ENCODE measurements at regions of chr17 and their contacts with region 1.

Region 1: DNA sequence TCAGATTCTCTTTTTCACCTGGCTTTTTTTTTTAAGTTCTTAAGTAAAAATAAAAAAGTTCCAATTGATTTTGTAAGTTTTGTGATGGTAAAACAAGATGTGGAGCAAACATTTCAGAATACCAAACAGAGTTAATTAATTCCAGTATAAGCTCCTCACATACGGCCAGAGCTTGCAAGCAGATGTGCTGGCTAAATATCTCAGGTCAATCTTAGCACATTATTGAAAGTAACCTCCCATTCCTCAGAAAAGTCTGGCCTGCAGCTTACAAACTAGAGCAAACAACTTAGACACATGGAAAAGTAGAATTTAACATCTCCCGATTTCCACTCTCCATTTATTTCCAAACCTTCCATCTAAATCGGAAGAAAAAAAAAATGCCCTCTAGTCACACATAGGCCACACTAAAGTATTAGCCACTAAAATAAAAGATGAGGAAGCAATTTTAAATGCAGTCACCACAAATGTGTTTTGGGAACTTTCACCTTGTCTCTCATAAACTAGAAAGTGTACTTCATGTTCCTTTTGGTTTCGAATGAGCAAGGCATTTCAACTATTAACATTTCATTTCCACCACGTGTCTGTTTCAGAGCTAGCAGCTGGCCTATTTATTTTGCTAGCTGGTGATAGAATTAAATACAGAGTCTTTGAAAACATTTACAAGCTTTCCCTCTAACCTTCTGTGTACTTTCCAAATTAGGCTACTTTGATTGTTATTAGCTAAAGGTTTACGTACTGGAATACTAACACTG is 143.3 kb downstream of the STX8 start:
- H3K4me3 Mint-ChIP-seq: no peak overlapping the region
- H3K27ac Mint-ChIP-seq: no peak overlapping the region
- H3K4me1 Mint-ChIP-seq: no peaks in the 10 kb centered on the region
- H3K27me3 Mint-ChIP-seq: no peaks in the 10 kb centered on the region

Region 2: GRCh38 chr17:9371019-9371418 is 61.3 kb before region 1 on chr17:
- intact Hi-C with region 1: loop called (anchors 10 kb)
- H3K4me3 Mint-ChIP-seq: no peak overlapping the region
- H3K27ac Mint-ChIP-seq: no peak overlapping the region
- H3K4me1 Mint-ChIP-seq: peaks cover 40% of the 10 kb centered on the region
- H3K27me3 Mint-ChIP-seq: no peaks in the 10 kb centered on the region

Region 3: DNA sequence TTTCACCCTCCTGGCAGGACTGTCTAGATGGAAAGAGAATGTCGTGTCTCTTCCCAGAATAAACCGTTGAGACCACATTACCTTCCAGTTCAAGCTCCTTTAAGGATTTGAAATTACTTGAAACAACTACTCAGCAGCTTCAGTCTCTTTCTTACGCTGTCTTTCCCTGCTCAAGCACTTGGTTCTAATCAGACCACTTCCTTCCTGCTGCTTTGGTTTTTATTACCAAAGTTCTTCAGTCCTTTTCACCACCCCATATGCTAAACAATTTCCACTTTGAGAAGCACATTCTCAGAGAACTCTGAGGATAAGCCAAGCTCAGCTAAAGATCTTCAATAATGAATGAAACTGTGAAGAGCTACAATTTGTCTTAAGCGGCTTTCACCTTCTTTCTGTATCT is 37.9 kb after region 1 on chr17:
- intact Hi-C with region 1: no loop called
- H3K4me3 Mint-ChIP-seq: no peak overlapping the region
- H3K27ac Mint-ChIP-seq: peak overlapping the region; percentile 38
- H3K4me1 Mint-ChIP-seq: peaks cover 6% of the 10 kb centered on the region
- H3K27me3 Mint-ChIP-seq: no peaks in the 10 kb centered on the region